ENCODE measurements at regions of chr15 and their contacts with region 1.

Region 1: GRCh38 chr15:89358755-89359439 is 24.3 kb upstream of the POLG start:
- DNase-seq: peak; percentile 80
- H3K4me3 Mint-ChIP-seq: peak overlapping the region; percentile 81
- H3K27ac Mint-ChIP-seq: peak overlapping the region; percentile 23
- H3K4me1 Mint-ChIP-seq: peaks cover 11% of the 10 kb centered on the region
- H3K27me3 Mint-ChIP-seq: peaks cover 63% of the 10 kb centered on the region

Region 2: GRCh38 chr15:89329329-89330084 is 29.4 kb before region 1 on chr15:
- intact Hi-C with region 1: no loop called
- DNase-seq: peak; percentile 27
- H3K4me3 Mint-ChIP-seq: peak overlapping the region; percentile 77
- H3K27ac Mint-ChIP-seq: peak overlapping the region; percentile 79
- H3K4me1 Mint-ChIP-seq: peaks cover 54% of the 10 kb centered on the region
- H3K27me3 Mint-ChIP-seq: no peaks in the 10 kb centered on the region

Region 3: DNA sequence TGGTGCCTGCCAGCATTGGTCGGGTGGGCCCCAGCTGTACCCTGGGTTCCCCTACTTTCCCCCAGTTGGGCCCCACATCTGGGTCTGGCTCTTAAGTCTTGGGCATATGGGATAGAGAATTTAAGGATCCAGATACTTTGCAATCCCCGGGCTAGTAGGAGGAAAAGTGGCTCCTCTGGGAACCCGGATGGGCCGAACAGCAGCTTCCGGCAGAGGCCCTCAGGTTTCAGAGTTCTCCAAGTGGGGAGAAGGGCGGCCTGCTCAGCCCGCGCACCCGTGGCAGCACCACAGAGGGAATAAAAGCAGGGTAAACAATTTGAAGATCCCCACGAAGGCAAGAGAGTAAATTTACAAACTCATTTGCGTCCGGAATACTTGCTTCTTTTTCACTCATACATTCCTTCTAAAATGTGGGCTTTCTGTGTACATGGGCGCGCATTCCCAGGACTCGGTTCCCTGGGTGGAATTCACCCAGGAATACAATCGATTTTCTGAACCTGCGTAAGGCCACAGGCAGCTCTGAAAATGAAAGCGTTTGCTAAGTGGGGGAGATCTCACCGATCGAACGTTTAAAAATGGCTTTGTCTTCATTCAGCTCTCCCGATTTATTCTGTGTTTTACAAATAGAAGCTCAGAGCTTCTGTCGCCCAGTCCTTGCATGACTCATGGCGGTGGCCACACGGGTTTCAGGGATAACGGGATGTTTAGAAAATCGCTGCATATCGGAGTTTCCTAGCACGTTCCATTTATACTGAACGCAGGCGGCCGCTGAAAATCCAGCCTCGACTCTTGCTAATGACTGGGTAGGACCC is 49.7 kb after region 1 on chr15:
- intact Hi-C with region 1: loop called (anchors 1 kb)
- DNase-seq: no peak
- H3K4me3 Mint-ChIP-seq: peak overlapping the region; percentile 87
- H3K27ac Mint-ChIP-seq: peak overlapping the region; percentile 71
- H3K4me1 Mint-ChIP-seq: peaks cover 39% of the 10 kb centered on the region
- H3K27me3 Mint-ChIP-seq: peaks cover 92% of the 10 kb centered on the region

Region 4: GRCh38 chr15:89416141-89416853 is 57.4 kb after region 1 on chr15:
- intact Hi-C with region 1: loop called (anchors 1 kb)
- DNase-seq: peak; percentile 64
- H3K4me3 Mint-ChIP-seq: no peak overlapping the region
- H3K27ac Mint-ChIP-seq: no peak overlapping the region
- H3K4me1 Mint-ChIP-seq: peaks cover 10% of the 10 kb centered on the region
- H3K27me3 Mint-ChIP-seq: peaks cover 75% of the 10 kb centered on the region

Region 5: DNA sequence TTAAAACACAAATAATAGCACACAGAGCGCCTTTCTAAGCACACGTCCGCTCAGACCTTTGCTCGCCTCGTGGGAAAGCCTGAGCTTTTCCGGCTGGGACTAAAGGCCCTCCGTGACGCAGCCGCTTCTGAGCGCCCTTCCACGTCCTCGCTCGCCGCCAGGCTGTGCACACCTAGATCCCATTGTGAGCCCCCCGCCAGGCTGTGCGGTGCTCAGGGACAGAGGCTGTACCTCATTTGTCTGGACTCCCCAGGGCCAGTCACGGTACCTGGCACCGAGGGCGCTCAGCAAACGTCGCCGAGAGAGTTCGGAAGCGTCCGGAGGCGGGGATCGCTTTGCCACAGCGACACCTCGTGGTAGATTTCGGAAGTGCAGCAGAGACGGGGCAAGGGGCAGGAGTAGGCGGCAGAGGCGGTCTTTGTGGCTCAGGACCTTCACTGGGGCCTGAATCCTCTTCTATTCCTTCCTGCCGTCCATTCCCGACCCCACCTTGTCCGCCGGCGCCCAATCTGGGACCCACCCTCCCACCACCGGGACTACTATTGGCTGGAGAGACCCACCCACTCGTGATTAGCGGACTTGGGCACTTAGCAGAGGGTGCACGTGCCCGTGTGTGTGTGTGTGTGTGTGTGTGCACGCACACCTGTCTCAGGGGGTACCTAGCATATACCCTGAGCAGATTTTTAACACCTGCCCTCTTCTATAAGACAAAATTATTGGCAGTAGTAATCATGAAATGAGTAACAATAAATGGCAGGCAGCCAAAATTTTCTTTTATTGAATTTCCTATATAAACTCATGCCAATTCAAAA is 71.8 kb after region 1 on chr15:
- intact Hi-C with region 1: loop called (anchors 1 kb)
- DNase-seq: peak; percentile 78
- H3K4me3 Mint-ChIP-seq: peak overlapping the region; percentile 82
- H3K27ac Mint-ChIP-seq: peak overlapping the region; percentile 2
- H3K4me1 Mint-ChIP-seq: peaks cover 7% of the 10 kb centered on the region
- H3K27me3 Mint-ChIP-seq: peaks cover 18% of the 10 kb centered on the region

Region 6: DNA sequence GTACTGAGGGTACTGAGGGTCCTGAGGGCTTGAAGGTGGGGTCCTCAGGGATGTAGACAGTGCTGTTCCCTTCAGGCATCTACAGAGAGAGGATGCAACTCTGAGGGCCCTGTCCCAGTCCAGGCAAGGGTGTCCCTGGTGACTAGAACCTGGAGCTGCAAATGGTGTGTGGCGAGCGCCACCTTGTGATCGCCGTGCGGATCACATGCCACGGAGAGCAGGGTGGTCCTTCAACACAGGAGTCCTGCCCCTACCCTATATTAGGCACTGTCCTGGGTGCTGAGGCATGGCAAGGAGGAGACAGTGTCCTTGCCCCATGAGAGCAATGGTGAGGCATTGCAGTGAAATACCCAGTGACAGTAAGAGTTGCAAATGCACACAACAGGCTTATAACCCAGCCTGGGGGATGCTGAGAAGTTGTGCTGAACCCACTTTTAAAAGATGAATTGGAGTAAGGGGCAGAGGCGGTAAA is 113.9 kb after region 1 on chr15:
- intact Hi-C with region 1: loop called (anchors 1 kb)
- DNase-seq: peak; percentile 33
- H3K4me3 Mint-ChIP-seq: no peak overlapping the region
- H3K27ac Mint-ChIP-seq: no peak overlapping the region
- H3K4me1 Mint-ChIP-seq: no peaks in the 10 kb centered on the region
- H3K27me3 Mint-ChIP-seq: peaks cover 24% of the 10 kb centered on the region

Region 7: GRCh38 chr15:89556413-89557262 is 197.7 kb after region 1 on chr15:
- intact Hi-C with region 1: loop called (anchors 1 kb)
- DNase-seq: peak; percentile 21
- H3K4me3 Mint-ChIP-seq: no peak overlapping the region
- H3K27ac Mint-ChIP-seq: no peak overlapping the region
- H3K4me1 Mint-ChIP-seq: no peaks in the 10 kb centered on the region
- H3K27me3 Mint-ChIP-seq: peaks cover 21% of the 10 kb centered on the region

Measured in activated T-helper 1 cell treated with anti-CD3 and anti-CD28 coated beads, Interleukin-12 subunit alpha, Interleukin-12 subunit beta, Interleukin-2, Interleukin-4 antibody, amounts not matched to agents 30 ng/mL and 10 ng/mL and 1 ng/mL, durations not matched to agents 14 hours and 24 hours and 36 hours (primary cell).